Ovary (tissue), 10 donors: ENCODE measurements at regions of chr2 and their contacts with region 1.

Region 1: DNA sequence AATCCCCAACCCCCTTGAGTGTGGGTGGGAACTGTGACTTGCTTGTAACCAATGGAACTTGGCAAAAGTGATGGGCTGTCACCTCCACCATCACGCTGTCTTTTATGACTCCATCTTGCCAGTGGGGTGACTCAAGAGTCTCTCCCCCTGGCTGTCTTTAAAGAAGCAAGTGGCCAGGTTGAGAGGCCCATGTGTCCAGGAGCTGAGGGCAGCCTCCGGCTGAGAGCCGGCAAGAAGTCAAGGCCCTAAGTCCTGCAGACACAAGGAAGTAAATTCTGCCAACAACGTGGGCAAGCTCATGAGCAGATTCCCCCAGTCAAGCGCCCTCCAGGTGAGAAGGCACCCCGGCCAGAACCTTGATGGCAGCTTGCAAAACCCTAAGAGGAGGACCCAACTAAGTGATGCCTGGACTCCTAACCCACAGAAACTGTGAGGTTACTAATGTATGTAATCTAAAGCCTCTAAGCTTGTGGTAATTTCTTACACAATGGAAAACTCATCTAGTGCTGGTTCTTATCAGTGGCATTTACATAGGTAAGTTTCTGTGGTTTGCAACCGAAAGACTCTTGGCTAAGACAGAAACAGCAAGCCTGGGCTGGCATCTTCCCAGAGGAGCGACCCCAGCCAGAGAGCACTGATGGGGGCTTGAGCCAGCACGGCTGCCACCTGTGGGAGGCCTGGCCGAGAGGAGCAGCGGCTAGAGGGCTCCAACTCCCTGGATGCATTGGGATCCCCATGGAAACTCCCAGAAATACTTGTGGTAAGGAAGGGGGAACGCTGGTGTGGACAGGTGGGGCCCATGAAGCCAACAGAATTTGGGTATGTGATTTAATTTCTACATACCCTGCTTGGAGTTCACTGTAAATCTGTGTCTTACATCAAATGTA is 49.3 kb downstream of the CIB4 start:
- DNase-seq: peak in 1 of 5 donors; percentile 16
- H3K4me3 ChIP-seq: no peak overlapping the region
- H3K27ac ChIP-seq: no peak overlapping the region
- H3K4me1 ChIP-seq: no peaks in the 10 kb centered on the region
- H3K27me3 ChIP-seq: no peaks in the 10 kb centered on the region
- CTCF ChIP-seq: no peak
- EP300 ChIP-seq: no peak
- POLR2A ChIP-seq: no peak

Region 2: GRCh38 chr2:26503231-26503880 is 88.5 kb before region 1 on chr2:
- intact Hi-C with region 1: no loop called
- DNase-seq: peak; percentile 28 to 75 (median 57)
- H3K4me3 ChIP-seq: peak overlapping the region; percentile 23
- H3K27ac ChIP-seq: no peak overlapping the region
- H3K4me1 ChIP-seq: no peaks in the 10 kb centered on the region
- H3K27me3 ChIP-seq: no peaks in the 10 kb centered on the region
- CTCF ChIP-seq: peak; percentile 26 to 50 (median 37)
- EP300 ChIP-seq: no peak
- POLR2A ChIP-seq: no peak

Region 3: DNA sequence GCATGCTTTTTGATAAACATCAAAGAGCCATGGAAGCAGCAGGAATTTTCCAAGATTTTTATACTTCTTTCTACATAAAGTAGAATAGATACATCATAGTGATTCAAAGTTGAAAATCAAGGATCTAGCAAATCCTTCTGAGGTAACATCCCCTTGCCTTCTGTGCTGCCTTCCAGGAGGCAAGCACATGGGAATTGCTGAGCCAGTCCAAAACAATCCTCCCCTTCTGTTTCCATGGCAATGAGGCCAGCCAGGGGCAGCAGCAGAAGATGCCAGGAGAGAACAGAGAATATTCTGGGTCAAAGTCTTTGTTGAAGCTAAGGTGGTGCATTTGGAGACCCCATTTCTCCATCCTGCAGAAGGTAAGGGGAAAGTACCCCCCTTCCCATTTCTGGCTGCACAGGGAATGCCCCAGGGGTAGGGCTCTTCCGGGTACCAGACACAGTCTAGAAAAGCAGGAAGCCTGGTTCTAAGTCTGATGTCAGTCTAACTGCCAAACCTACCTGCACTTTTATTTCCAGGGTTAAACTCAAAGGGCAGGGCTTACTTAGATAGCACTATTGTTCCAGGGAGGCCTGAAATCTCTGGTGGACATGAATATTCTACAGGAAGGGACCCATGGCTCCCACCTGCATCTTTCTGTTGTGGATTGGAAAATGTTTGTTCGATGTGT is 216.1 kb after region 1 on chr2:
- intact Hi-C with region 1: no loop called
- DNase-seq: peak in 4 of 5 donors; percentile 29 to 62 (median 42)
- H3K4me3 ChIP-seq: no peak overlapping the region
- H3K27ac ChIP-seq: no peak overlapping the region
- H3K4me1 ChIP-seq: no peaks in the 10 kb centered on the region
- H3K27me3 ChIP-seq: no peaks in the 10 kb centered on the region
- CTCF ChIP-seq: no peak
- EP300 ChIP-seq: no peak
- POLR2A ChIP-seq: no peak

Region 4: GRCh38 chr2:28521663-28522062 is 1929.8 kb after region 1 on chr2:
- intact Hi-C with region 1: loop called in 1 of 4 experiments (anchors 5 kb)
- DNase-seq: no peak
- H3K4me3 ChIP-seq: no peak overlapping the region
- H3K27ac ChIP-seq: no peak overlapping the region
- H3K4me1 ChIP-seq: peaks cover 2% of the 10 kb centered on the region
- H3K27me3 ChIP-seq: no peaks in the 10 kb centered on the region
- CTCF ChIP-seq: no peak
- EP300 ChIP-seq: no peak
- POLR2A ChIP-seq: no peak